ENCODE measurements at regions of chr11 and their contacts with region 1.

Region 1: GRCh38 chr11:6298605-6299004 is 21.7 kb downstream of the CAVIN3 start:
- DNase-seq: peak; percentile 60
- ATAC-seq: peak; percentile 98
- H3K4me3 ChIP-seq: no peak overlapping the region
- H3K27ac ChIP-seq: no peak overlapping the region
- H3K4me1 ChIP-seq: no peaks in the 10 kb centered on the region
- H3K27me3 ChIP-seq: peaks cover 18% of the 10 kb centered on the region
- CTCF ChIP-seq: peak; percentile 88

Region 2: DNA sequence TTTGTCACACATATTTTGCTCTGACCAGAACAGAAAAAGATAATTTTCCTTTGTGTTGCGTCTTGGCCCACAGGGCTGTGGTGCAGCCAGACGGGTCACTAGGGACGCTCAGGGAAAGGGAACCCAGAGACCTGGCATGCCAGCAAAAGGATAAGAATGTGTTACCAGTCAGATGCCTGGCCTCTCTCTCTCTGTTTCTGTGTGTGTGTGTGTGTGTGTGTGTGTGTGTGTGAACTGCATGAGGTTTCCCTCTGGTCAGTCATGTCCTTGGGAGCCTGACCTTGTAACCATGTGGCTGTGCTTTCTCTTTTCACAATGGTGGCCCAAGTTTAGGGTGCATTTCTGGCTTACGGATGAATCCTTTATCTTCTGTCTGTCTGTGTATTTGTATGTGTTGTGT is 13.6 kb before region 1 on chr11:
- CTCF ChIA-PET with region 1: no interaction called
- POLR2A ChIA-PET with region 1: no interaction called
- intact Hi-C with region 1: no loop called
- DNase-seq: no peak
- ATAC-seq: no peak
- H3K4me3 ChIP-seq: no peak overlapping the region
- H3K27ac ChIP-seq: no peak overlapping the region
- H3K4me1 ChIP-seq: peaks cover 18% of the 10 kb centered on the region
- H3K27me3 ChIP-seq: peaks cover 13% of the 10 kb centered on the region; the same call in 1 of the 2 replicates
- CTCF ChIP-seq: no peak

Region 3: GRCh38 chr11:6315811-6316425 is 17.3 kb after region 1 on chr11:
- CTCF ChIA-PET with region 1: no interaction called
- POLR2A ChIA-PET with region 1: no interaction called
- intact Hi-C with region 1: loop called (anchors 2 kb)
- DNase-seq: peak; percentile 64
- ATAC-seq: peak; percentile 98
- H3K4me3 ChIP-seq: no peak overlapping the region
- H3K27ac ChIP-seq: no peak overlapping the region
- H3K4me1 ChIP-seq: no peaks in the 10 kb centered on the region
- H3K27me3 ChIP-seq: peaks cover 35% of the 10 kb centered on the region
- CTCF ChIP-seq: peak; percentile 84

Region 4: GRCh38 chr11:6351782-6352382 is 53.3 kb after region 1 on chr11:
- CTCF ChIA-PET with region 1: no interaction called
- POLR2A ChIA-PET with region 1: no interaction called
- intact Hi-C with region 1: no loop called
- DNase-seq: no peak
- ATAC-seq: no peak
- H3K4me3 ChIP-seq: no peak overlapping the region
- H3K27ac ChIP-seq: no peak overlapping the region
- H3K4me1 ChIP-seq: peaks cover 1% of the 10 kb centered on the region; the same call in 1 of the 2 replicates
- H3K27me3 ChIP-seq: peaks cover 19% of the 10 kb centered on the region; the same call in 1 of the 2 replicates
- CTCF ChIP-seq: no peak

Region 5: DNA sequence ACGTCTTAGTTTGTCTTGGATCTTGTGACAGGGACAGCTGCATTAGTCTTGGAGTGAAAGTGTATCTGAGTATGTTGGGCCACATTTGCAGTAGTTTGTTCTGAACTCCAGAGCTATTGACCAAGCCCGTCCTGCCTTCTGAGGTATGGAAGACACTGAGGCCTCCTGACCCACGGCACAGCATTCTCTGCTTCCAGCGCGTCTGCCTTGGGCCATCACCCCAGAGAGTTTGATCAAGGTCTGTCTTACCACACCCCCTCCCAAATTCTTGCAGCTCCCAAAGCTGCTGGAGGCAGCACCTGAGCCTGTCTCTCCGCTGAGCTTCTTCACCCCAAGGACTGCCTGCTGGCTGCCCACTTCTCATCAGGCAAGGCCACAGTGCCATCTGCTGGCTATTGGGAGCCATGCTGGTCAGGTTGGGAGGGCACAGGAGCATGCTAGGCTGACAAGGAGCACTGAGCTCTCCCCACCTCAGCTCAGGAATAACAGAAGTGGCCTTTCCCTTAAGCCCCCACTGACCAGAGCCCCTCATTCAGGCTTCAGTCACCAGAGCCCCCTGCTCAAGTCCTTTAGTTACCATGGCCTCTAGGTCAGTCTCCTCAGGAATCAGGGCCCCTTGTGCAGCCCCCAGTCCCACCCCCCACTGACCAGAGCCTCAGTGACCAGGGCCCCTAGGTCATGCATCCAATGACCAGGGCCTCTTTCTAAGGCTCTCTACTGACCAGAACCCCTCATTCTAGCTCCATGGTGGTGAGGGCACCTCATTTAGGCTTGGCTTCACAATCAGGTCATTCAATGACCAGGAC is 64.5 kb after region 1 on chr11:
- CTCF ChIA-PET with region 1: interaction called, 8 read pairs
- POLR2A ChIA-PET with region 1: no interaction called
- intact Hi-C with region 1: loop called (anchors 5 kb)
- DNase-seq: peak; percentile 77
- ATAC-seq: peak; percentile 99
- H3K4me3 ChIP-seq: no peak overlapping the region
- H3K27ac ChIP-seq: no peak overlapping the region
- H3K4me1 ChIP-seq: no peaks in the 10 kb centered on the region
- H3K27me3 ChIP-seq: no peaks in the 10 kb centered on the region
- CTCF ChIP-seq: peak; percentile 87

Measured in PC-3 (cell line).